WTC11 (cell line): ENCODE measurements at regions of chr12 and their contacts with region 1.

Region 1: DNA sequence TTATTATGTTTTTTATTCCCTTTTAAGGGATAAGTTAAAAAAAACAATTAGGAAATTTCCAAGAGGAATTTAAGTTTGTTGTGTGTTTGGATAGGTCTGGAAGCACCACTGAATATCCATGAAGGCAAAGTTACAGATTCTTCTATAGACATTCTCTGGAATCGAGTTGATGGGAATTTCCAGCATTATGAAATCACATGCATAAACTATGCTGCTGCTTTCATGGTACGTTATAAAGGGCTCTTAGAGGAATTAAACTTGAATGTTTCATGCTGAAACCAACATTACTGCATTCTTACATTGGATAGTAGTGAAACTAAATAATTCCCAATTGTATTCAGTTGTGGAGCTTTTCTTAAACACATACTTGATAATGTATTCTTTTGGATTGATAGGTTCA is 21.5 kb upstream of the PTPRQ start:
- DNase-seq: no peak
- ATAC-seq: no peak
- H3K4me3 Mint-ChIP-seq: no peak overlapping the region
- H3K27ac Mint-ChIP-seq: no peak overlapping the region
- H3K4me1 Mint-ChIP-seq: no peaks in the 10 kb centered on the region
- H3K27me3 Mint-ChIP-seq: no peaks in the 10 kb centered on the region
- CTCF ChIP-seq: no peak

Region 2: GRCh38 chr12:79645235-79645630 is 777.3 kb before region 1 on chr12:
- CTCF ChIA-PET with region 1: no interaction called
- POLR2A ChIA-PET with region 1: interaction called, 10 read pairs
- DNase-seq: no peak
- ATAC-seq: no peak
- H3K4me3 Mint-ChIP-seq: peak overlapping the region; percentile 22; the same call in 1 of the 2 replicates
- H3K27ac Mint-ChIP-seq: peak overlapping the region; percentile 26
- H3K4me1 Mint-ChIP-seq: peaks cover 67% of the 10 kb centered on the region
- H3K27me3 Mint-ChIP-seq: no peaks in the 10 kb centered on the region
- CTCF ChIP-seq: no peak

Region 3: DNA sequence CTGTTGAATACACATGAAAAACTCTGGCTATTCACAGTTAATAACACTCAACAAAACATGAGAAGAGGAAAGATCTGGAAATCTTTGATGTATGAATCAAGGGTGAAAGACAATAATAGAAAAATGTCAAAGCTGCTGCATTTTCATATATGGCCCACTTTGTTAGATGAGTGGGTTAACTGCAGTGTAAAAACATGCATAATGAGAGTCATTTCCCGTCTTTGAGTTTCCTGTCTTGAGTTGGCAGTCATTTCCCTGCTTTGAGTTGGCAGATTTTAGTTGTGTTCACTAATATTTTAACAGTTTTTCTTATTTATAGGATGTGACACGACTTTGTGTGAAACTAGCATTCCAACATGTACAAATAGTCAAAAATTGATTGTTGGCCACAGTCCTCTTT is 66.5 kb before region 1 on chr12:
- CTCF ChIA-PET with region 1: no interaction called
- POLR2A ChIA-PET with region 1: no interaction called
- DNase-seq: no peak
- ATAC-seq: no peak
- H3K4me3 Mint-ChIP-seq: no peak overlapping the region
- H3K27ac Mint-ChIP-seq: no peak overlapping the region
- H3K4me1 Mint-ChIP-seq: no peaks in the 10 kb centered on the region
- H3K27me3 Mint-ChIP-seq: no peaks in the 10 kb centered on the region
- CTCF ChIP-seq: no peak

Region 4: DNA sequence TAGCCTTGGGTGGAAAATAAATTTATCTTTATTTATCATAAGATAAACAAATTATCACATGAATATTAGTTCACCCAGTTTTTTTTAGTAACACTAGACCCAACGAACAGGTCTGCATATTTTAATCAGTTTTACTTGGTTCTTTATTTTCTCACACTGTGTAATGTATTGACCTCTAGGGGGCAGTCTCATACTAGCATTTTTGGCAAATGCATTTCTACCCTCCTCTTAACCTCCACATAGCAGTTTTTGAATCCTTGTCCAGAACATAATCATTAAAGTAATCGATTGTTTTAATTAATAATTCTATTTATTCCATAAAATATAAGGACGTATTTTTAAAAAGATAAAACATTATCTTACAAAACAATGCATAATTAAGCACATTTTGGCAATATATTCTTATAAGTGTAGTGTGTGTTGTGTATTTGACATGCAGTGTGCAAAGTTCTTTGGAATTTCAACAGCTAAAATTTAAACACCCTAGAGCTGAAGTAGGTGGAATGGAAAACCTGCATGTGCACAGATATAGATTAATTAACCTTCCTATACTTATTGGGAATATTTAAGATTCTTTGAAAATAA is 10.1 kb before region 1 on chr12:
- CTCF ChIA-PET with region 1: no interaction called
- POLR2A ChIA-PET with region 1: no interaction called
- DNase-seq: no peak
- ATAC-seq: peak; percentile 63; the same call in 1 of the 2 replicates
- H3K4me3 Mint-ChIP-seq: no peak overlapping the region
- H3K27ac Mint-ChIP-seq: no peak overlapping the region
- H3K4me1 Mint-ChIP-seq: no peaks in the 10 kb centered on the region
- H3K27me3 Mint-ChIP-seq: no peaks in the 10 kb centered on the region; the same call in none of the 2 replicates
- CTCF ChIP-seq: peak; percentile 69